BJ (cell line): ENCODE measurements at regions of chr7 and their contacts with region 1.

Region 1: GRCh38 chr7:36986429-36987362 is 262.4 kb upstream of the AOAH start:
- DNase-seq: no peak
- H3K4me3 ChIP-seq: no peak overlapping the region
- H3K27me3 ChIP-seq: no peaks in the 10 kb centered on the region
- CTCF ChIP-seq: peak; percentile 94

Region 2: DNA sequence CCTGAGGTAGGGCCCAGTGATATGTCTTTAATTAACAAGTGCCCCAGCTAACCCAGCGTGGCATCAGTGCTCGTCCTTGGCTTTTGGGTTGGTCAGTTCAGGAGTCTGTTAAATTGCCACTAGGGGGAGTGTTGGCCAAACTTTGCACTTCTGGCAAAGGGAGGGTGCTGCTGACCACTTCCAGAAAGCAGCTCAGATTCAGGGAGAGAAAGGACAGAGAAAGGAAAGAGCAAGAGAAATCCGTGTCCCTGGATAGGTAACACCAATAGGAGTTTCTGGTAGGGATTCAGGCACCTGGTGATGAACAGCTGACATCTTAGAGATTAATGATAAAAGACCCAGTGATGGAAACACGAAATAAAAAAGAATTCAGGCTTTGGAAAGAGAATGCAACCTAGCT is 19.3 kb before region 1 on chr7:
- CTCF ChIA-PET with region 1: interaction called, 98 read pairs
- POLR2A ChIA-PET with region 1: no interaction called
- DNase-seq: no peak
- H3K4me3 ChIP-seq: no peak overlapping the region
- H3K27me3 ChIP-seq: no peaks in the 10 kb centered on the region
- CTCF ChIP-seq: peak; percentile 83

Region 3: DNA sequence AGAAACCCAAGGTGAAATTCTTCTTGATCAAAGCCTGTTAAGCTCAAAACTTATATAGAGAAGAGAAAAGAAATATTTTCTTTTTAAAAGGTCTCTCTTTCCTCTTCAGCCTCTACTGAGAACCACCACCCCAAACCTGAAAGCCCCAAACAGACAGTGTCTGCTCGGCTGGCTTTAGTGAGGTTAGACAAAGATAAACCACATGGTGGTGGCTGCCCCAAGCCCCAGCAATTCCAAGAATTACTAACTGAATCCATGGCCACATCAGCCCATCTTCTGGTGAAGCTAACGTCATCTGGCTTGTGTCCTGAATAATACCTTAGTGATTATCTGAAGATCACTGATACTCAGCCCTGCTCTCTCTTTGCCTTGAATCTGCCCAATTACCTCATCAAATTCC is 187.0 kb after region 1 on chr7:
- CTCF ChIA-PET with region 1: interaction called, 20 read pairs
- POLR2A ChIA-PET with region 1: no interaction called
- DNase-seq: no peak
- H3K4me3 ChIP-seq: no peak overlapping the region
- H3K27me3 ChIP-seq: no peaks in the 10 kb centered on the region
- CTCF ChIP-seq: no peak

Region 4: GRCh38 chr7:37201003-37201875 is 214.5 kb after region 1 on chr7:
- CTCF ChIA-PET with region 1: interaction called, 16 read pairs
- POLR2A ChIA-PET with region 1: no interaction called
- DNase-seq: no peak
- H3K4me3 ChIP-seq: no peak overlapping the region
- H3K27me3 ChIP-seq: no peaks in the 10 kb centered on the region
- CTCF ChIP-seq: peak; percentile 83